ENCODE measurements at regions of chr12 and their contacts with region 1.

Region 1: DNA sequence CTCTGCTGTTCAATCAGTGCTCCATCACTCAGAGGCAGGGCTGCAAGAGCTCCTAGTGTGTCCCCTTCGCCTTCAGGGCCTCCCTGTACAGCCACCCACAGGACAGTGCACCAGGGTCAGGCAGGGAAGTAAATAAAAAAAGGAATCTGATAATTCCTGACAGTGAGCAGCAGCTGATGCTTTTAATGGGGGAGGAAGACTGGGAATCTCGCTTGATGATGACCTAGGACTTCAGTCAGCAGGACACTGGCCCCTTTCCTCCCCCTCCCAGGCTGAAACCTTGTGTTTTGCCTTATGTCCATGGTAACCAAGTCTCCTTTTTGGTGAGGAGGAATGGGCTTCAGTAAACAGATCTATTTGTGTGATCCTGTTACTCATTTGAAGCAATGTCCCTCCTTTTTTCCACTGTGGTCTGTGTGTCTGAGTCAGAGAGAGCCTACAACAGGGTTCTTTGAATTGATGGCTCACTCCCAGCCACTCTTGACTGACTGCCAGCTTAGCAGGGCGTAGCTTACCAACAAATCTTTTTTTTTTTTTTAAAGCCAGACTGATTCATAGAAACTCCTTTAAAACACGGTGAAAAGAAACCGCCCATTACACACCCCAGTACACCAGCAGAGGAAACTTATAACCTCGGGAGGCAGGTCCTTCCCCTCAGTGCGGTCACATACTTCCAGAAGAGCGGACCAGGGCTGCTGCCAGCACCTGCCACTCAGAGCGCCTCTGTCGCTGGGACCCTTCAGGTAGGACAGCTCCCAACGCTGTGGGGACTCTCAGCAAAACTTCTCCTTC is at the start of gene EMP1:
- DNase-seq: peak; percentile 93
- H3K4me3 Mint-ChIP-seq: peak within 1 kb of the TSS; percentile 72
- H3K27ac Mint-ChIP-seq: peak within 1 kb of the TSS; percentile 38
- H3K4me1 Mint-ChIP-seq: peaks cover 20% of the 10 kb centered on the region
- H3K27me3 Mint-ChIP-seq: peaks cover 4% of the 10 kb centered on the region
- total RNA-seq, gene EMP1: 3.0 to 4.0 TPM

Region 2: DNA sequence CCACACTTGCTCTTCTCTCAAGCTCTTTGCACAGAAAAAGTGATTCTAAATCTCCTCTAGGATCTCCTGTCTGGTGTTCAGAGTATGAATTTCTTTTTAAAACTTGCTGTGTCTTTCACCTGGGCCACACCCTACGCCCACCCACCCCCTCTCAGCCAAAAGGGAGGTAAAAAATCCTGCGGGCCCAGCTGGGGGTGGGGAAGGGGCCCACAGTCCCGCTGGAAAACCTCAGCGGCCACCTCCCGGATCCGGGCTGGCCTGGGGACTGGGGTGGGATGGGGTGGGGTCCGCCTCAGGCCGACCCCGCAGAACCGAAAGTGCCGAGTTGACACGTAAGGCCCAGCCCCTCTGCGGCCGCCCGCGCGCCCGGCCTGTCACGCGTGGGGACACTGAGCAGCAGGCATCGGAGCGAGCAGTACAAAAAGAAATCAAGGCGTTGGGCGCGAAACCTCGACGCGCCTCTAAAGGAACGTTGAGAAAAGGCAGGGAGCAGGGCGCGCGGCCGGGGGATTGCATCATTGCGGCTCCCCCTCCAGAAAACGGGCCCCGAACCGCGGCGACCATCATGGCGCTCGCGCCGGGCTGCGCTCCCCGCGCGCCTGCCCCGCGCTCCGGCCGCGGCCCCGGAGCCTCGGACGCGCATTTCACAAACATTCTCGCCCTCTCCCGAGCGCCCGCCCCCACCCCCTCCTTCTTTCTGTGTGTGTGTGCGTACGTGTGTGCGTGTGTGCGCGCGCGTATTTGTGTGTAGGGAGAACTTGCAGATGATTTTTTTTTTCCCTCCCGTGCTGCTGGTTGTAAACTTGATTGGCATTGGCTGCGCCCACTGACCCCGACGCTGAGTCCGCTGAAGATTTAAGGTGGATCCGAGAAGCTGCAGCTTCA is 471.4 kb before region 1 on chr12:
- CTCF ChIA-PET with region 1: no interaction called
- intact Hi-C with region 1: loop called (anchors 2 kb)
- DNase-seq: peak; percentile 94
- H3K4me3 Mint-ChIP-seq: peak overlapping the region; percentile 85
- H3K27ac Mint-ChIP-seq: peak overlapping the region; percentile 98
- H3K4me1 Mint-ChIP-seq: peaks cover 51% of the 10 kb centered on the region
- H3K27me3 Mint-ChIP-seq: no peaks in the 10 kb centered on the region

Region 3: GRCh38 chr12:12916135-12916944 is 280.0 kb before region 1 on chr12:
- CTCF ChIA-PET with region 1: interaction called, 10 read pairs
- intact Hi-C with region 1: no loop called
- DNase-seq: peak; percentile 94
- H3K4me3 Mint-ChIP-seq: no peak overlapping the region
- H3K27ac Mint-ChIP-seq: no peak overlapping the region
- H3K4me1 Mint-ChIP-seq: peaks cover 7% of the 10 kb centered on the region
- H3K27me3 Mint-ChIP-seq: peaks cover 6% of the 10 kb centered on the region

Region 4: GRCh38 chr12:13044002-13044905 is 152.1 kb before region 1 on chr12 and contains the start of gene FAM234B:
- CTCF ChIA-PET with region 1: no interaction called
- intact Hi-C with region 1: loop called (anchors 1 kb)
- DNase-seq: peak; percentile 73
- H3K4me3 Mint-ChIP-seq: peak within 1 kb of the TSS; percentile 79
- H3K27ac Mint-ChIP-seq: no peak within 1 kb of the TSS
- H3K4me1 Mint-ChIP-seq: peaks cover 16% of the 10 kb centered on the region
- H3K27me3 Mint-ChIP-seq: no peaks in the 10 kb centered on the region
- total RNA-seq, gene FAM234B: 7.4 to 7.7 TPM

Region 5: GRCh38 chr12:13165617-13166041 is 30.7 kb before region 1 on chr12:
- CTCF ChIA-PET with region 1: no interaction called
- intact Hi-C with region 1: loop called (anchors 1 kb)
- DNase-seq: peak; percentile 93
- H3K4me3 Mint-ChIP-seq: no peak overlapping the region
- H3K27ac Mint-ChIP-seq: peak overlapping the region; percentile 31
- H3K4me1 Mint-ChIP-seq: peaks cover 23% of the 10 kb centered on the region
- H3K27me3 Mint-ChIP-seq: no peaks in the 10 kb centered on the region

Region 6: DNA sequence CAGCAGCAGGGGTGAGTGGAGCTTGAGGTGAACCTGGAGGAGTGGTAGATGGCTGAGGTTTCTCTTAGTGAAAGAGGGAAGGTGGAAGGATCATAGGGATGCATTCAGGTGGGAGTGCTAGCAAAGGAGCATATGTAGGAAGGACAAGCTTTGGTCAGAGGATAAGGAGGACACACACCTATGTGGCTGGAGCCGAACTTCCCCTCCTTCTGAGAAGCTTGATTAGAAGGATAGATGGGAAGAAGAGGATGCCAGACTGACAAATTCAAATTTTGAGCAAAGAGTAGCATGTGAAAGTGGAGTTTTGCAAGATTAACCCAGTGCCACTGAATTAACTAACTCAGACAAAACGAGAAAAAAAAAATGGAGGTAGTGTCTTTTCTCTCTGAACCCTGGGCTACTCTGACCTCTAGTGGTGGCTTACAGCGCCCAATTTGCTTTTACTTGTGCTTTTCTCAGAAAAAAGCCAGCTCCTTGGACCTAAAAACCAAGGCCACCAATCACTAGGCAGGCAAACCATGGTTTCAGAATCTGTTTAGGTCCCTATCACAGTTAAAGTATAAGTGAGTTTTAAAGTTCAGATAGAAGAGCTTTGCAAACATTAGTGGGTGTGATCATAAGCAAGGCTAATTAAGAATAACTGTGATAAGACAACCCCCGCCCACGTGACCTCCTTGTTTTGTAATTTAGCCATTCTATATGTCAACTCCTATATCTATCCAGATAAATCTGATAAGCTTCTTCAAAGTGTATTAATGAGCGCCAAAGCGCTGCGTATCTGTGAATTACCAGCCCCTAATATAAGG is 15.7 kb after region 1 on chr12:
- CTCF ChIA-PET with region 1: interaction called, 14 read pairs
- intact Hi-C with region 1: loop called (anchors 1 kb)
- DNase-seq: peak; percentile 86
- H3K4me3 Mint-ChIP-seq: no peak overlapping the region
- H3K27ac Mint-ChIP-seq: no peak overlapping the region
- H3K4me1 Mint-ChIP-seq: peaks cover 20% of the 10 kb centered on the region
- H3K27me3 Mint-ChIP-seq: peaks cover 2% of the 10 kb centered on the region

Region 7: DNA sequence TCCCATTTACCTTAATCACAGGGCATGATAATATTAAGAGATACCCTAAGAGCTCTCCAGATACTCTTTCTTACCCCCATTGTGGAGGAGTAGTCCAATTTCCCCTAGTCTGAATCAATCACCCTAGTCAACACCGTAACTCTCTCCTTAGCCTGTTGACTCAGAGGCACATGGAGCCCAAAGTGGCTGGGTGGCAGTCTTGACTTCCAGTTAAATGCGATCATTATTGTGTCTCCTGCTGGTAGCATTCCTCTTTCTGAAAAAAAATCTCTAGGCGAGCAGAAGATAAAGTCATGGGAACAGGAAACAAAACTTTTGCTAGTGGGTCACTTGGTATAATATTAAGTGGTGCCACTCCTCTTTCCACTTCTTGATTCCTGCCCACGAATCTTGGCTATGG is 46.6 kb after region 1 on chr12:
- CTCF ChIA-PET with region 1: no interaction called
- intact Hi-C with region 1: no loop called
- DNase-seq: no peak
- H3K4me3 Mint-ChIP-seq: no peak overlapping the region
- H3K27ac Mint-ChIP-seq: no peak overlapping the region
- H3K4me1 Mint-ChIP-seq: no peaks in the 10 kb centered on the region
- H3K27me3 Mint-ChIP-seq: peaks cover 2% of the 10 kb centered on the region